Activated naive CD4-positive, alpha-beta T cell treated with anti-CD3 and anti-CD28 coated beads for 36 hours (primary cell): ENCODE measurements at regions of chr11 and their contacts with region 1.

Region 1: GRCh38 chr11:129331871-129332274 is 43.8 kb upstream of the BARX2 start:
- DNase-seq: peak; percentile 85
- H3K4me3 Mint-ChIP-seq: no peak overlapping the region
- H3K27ac Mint-ChIP-seq: no peak overlapping the region
- H3K4me1 Mint-ChIP-seq: peaks cover 4% of the 10 kb centered on the region
- H3K27me3 Mint-ChIP-seq: no peaks in the 10 kb centered on the region

Region 2: DNA sequence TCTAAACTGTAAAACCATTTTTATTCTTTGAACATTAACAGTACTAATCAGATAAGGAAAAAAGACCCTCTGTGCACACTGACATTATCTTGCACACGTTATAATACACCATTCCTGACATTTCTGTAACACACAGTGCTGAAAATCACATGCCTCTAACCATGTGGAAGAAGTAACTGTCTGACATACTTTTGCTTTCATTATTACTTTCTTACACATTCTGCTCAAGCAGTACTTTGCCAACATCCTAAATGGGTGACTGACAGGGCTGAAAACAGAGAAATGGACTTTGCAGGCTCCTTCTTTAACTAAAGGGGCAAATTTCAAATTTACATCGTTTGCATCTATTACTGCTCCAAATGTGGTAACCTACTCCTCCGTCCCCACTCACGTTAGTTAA is 366.4 kb before region 1 on chr11:
- CTCF ChIA-PET with region 1: no interaction called
- intact Hi-C with region 1: loop called (anchors 5 kb)
- DNase-seq: no peak
- H3K4me3 Mint-ChIP-seq: no peak overlapping the region
- H3K27ac Mint-ChIP-seq: no peak overlapping the region
- H3K4me1 Mint-ChIP-seq: peaks cover 25% of the 10 kb centered on the region
- H3K27me3 Mint-ChIP-seq: no peaks in the 10 kb centered on the region

Region 3: DNA sequence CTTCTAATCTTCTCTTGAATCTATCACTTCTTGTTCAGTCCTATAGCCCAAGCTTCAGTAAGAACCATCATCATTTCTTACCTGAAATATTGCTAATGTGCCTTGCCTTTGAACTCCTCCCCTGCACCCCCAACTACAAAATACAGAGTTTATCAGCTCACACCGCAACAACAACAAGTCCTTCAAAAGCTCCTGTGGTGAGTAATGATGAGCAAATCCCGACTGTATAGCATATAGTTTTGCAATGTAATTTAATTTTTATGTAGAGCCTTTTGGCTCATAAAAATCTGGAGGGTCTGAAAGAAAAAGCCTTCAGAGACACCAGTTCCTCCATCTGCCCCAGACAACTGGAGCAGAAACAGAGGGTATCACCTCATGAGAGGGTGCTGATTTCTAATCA is 264.4 kb before region 1 on chr11:
- CTCF ChIA-PET with region 1: no interaction called
- intact Hi-C with region 1: no loop called
- DNase-seq: no peak
- H3K4me3 Mint-ChIP-seq: no peak overlapping the region
- H3K27ac Mint-ChIP-seq: no peak overlapping the region
- H3K4me1 Mint-ChIP-seq: no peaks in the 10 kb centered on the region
- H3K27me3 Mint-ChIP-seq: no peaks in the 10 kb centered on the region

Region 4: DNA sequence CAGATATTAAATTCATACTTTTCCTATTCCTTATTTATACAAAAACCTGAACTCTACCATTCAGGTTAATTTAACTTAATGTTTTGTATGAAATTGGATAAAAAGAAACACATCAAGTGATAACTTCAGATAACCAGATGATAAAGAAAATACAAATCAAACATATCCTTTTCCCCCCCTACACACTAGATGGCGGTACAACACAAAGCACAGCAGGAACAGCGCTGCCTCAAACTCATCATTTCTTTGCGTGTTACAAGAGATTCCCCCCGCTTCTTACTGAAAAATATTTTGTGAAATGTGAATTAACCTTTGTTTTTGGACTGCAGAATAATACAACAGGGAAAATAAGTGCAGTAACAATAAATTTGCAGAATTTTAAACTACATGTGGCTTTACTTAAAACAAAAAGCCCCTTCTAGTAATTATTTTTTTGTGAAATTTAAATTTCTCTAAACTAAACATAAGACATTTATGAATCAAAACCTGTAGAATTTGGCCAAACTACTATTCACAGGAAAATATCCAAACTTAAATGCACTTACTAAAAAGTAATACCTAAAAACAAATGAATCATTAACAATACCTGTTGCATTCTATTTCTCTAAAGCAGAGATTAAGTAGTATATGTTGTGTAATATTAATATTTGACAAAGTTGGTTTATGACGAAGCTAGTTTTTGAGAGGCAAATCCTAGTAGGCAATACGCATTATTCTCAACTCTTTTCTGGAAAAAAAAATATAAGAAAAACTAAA is 214.1 kb before region 1 on chr11:
- CTCF ChIA-PET with region 1: interaction called, 37 read pairs
- intact Hi-C with region 1: loop called (anchors 1 kb)
- DNase-seq: peak; percentile 64
- H3K4me3 Mint-ChIP-seq: no peak overlapping the region
- H3K27ac Mint-ChIP-seq: no peak overlapping the region
- H3K4me1 Mint-ChIP-seq: peaks cover 3% of the 10 kb centered on the region
- H3K27me3 Mint-ChIP-seq: no peaks in the 10 kb centered on the region

Region 5: DNA sequence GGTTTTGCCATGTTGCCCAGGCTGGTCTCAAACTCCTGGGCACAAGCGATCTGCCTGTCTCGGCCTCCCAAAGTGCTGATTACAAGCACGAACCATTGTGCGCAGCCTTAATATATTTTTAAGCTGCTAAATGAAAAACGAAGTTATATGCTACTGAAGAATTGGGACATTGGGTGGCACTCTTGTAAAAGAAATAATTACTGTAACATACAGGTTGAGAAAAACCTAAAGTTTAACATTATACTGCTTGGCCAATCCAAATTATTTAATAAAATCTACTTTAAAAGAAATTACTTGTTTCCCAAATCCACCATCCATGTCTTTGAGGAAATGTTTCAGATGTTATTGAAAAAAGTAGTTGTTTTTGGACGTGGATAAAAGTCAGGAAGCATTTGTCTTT is 101.9 kb before region 1 on chr11:
- CTCF ChIA-PET with region 1: interaction called, 8 read pairs
- intact Hi-C with region 1: loop called (anchors 1 kb)
- DNase-seq: no peak
- H3K4me3 Mint-ChIP-seq: no peak overlapping the region
- H3K27ac Mint-ChIP-seq: no peak overlapping the region
- H3K4me1 Mint-ChIP-seq: no peaks in the 10 kb centered on the region
- H3K27me3 Mint-ChIP-seq: no peaks in the 10 kb centered on the region

Region 6: DNA sequence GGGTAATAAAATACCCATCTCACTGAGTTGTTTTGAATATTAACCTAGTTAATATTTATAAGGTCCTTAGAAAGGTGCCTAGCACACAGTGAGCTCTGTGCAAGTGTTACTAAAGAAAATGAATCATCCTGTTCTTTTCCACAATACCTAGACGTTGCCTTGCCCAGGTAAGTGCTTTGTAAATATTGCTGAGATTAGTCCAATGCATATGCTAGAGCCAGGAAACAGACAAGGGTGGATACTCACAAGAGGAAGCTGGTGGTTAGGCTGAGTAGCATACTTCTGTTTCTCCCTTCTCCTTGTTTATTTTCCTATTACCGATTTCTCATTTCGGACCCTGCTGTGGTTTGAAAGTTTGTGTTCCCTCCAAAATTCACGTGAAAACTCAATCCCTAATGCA is 14.3 kb before region 1 on chr11:
- CTCF ChIA-PET with region 1: interaction called, 15 read pairs
- intact Hi-C with region 1: no loop called
- DNase-seq: no peak
- H3K4me3 Mint-ChIP-seq: no peak overlapping the region
- H3K27ac Mint-ChIP-seq: no peak overlapping the region
- H3K4me1 Mint-ChIP-seq: peaks cover 7% of the 10 kb centered on the region
- H3K27me3 Mint-ChIP-seq: no peaks in the 10 kb centered on the region